AG04450 (cell line): ENCODE measurements at regions of chr3 and their contacts with region 1.

Region 1: GRCh38 chr3:63993653-63994079 is 29.6 kb downstream of the PSMD6 start:
- DNase-seq: peak; percentile 47
- H3K4me3 ChIP-seq: no peak overlapping the region
- H3K27ac ChIP-seq: no peak overlapping the region
- H3K27me3 ChIP-seq: no peaks in the 10 kb centered on the region
- CTCF ChIP-seq: peak; percentile 99

Region 2: GRCh38 chr3:63892773-63893352 is 100.8 kb before region 1 on chr3:
- CTCF ChIA-PET with region 1: interaction called, 11 read pairs
- POLR2A ChIA-PET with region 1: no interaction called
- DNase-seq: no peak
- H3K4me3 ChIP-seq: no peak overlapping the region
- H3K27ac ChIP-seq: no peak overlapping the region
- H3K27me3 ChIP-seq: no peaks in the 10 kb centered on the region
- CTCF ChIP-seq: no peak

Region 3: DNA sequence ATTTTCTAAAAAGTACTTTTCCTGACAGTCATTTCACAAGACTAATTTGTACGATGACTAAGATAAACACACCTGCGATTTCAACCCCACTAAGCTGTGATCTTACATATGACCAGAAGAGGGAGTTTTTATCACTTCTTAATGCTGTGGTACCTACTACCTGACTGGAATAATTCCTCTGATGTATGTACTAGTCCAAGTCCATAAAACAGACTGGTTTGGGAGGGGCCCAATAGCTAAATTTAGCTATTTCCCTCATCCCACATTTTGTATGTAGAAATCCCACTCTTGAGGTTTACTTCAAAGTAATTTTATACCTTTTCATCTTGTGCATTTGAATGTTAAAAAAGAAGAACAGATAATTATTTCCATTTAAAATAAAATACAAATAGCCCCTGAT is 31.8 kb before region 1 on chr3:
- CTCF ChIA-PET with region 1: interaction called, 62 read pairs
- POLR2A ChIA-PET with region 1: interaction called, 7 read pairs
- DNase-seq: no peak
- H3K4me3 ChIP-seq: no peak overlapping the region
- H3K27ac ChIP-seq: no peak overlapping the region
- H3K27me3 ChIP-seq: no peaks in the 10 kb centered on the region
- CTCF ChIP-seq: peak; percentile 76

Region 4: GRCh38 chr3:63981980-63982379 is 11.7 kb before region 1 on chr3:
- CTCF ChIA-PET with region 1: interaction called, 67 read pairs
- POLR2A ChIA-PET with region 1: no interaction called
- DNase-seq: no peak
- H3K4me3 ChIP-seq: no peak overlapping the region
- H3K27ac ChIP-seq: no peak overlapping the region
- H3K27me3 ChIP-seq: no peaks in the 10 kb centered on the region
- CTCF ChIP-seq: no peak